ENCODE measurements at regions of chr3 and their contacts with region 1.

Region 1: DNA sequence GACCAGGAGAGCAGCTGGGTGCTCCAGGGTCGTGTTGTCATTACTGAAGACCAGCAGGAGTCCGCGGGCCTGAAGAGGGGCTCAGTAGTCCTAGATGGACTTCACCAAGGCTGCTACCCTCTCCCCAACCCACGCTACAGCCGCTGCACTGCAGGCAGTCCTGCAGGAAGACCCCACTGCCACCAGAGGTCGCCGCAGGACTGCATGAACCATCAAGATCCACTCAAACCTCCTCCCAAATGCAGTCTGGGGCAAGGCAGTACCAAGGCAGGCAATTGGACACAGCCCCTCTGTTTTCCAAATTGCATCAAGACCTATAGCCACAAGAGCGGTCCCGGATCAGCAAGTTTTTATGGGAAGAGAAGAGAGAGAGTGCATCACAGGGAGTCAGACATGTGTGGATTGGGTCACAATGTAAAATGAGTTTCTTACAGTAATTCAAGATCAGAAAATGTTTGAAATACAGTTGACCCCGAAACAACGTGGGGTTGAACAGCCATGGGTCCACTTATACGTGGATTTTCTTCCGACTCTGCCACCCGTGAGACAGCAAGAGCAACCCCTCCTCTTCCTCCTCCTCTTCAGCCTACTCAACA is 46.7 kb downstream of the DZIP1L start:
- DNase-seq: peak; percentile 75
- H3K4me3 ChIP-seq: no peak overlapping the region
- H3K27ac ChIP-seq: no peak overlapping the region
- H3K4me1 ChIP-seq: no peaks in the 10 kb centered on the region
- H3K27me3 ChIP-seq: no peaks in the 10 kb centered on the region
- CTCF ChIP-seq: peak; percentile 99

Region 2: GRCh38 chr3:137930976-137931375 is 137.7 kb before region 1 on chr3:
- intact Hi-C with region 1: no loop called
- DNase-seq: no peak
- H3K4me3 ChIP-seq: no peak overlapping the region
- H3K27ac ChIP-seq: no peak overlapping the region
- H3K4me1 ChIP-seq: no peaks in the 10 kb centered on the region
- H3K27me3 ChIP-seq: peaks cover 14% of the 10 kb centered on the region
- CTCF ChIP-seq: no peak

Region 3: DNA sequence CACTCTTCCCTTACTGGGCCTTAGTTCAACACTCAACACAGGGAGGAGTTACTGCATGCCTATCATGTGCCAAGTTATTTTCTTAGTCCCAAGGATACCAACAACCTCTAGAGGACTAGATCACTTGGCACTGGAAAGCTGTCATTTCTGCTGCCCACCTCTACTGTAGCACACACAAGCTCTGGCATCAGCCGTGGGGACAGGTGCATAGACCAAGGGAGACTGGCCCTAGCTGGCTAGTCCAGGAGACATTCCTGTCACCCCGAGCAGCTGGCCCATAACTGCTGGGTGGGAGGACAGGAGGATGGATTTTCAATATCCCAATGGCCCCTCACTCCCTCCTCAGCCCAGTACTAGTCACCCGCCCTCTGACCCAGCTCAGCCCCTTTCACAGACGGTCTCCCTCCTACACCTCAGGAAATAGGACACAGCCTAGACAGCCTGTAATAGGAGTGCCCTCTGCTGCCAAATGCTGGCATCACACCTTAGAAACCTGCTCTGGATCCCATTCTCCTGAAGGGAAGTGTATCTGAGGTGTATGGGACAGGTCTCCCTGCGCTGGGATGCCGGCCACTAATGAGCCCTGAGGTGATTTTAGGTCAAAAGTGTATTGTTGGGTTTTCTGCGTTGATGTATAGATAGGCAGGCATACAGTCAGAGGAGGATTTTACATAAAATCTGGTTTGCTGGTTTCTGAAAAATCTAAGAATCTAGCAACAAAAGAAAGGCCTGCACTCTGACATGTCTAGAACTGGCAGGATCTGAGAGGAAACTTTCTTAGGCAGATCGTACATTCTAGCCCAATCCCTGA is 50.1 kb after region 1 on chr3:
- intact Hi-C with region 1: loop called (anchors 5 kb)
- DNase-seq: peak; percentile 66
- H3K4me3 ChIP-seq: no peak overlapping the region
- H3K27ac ChIP-seq: no peak overlapping the region
- H3K4me1 ChIP-seq: peaks cover 26% of the 10 kb centered on the region
- H3K27me3 ChIP-seq: no peaks in the 10 kb centered on the region
- CTCF ChIP-seq: peak; percentile 89

Region 4: GRCh38 chr3:138356730-138357405 is 288.2 kb after region 1 on chr3:
- intact Hi-C with region 1: no loop called
- DNase-seq: no peak
- H3K4me3 ChIP-seq: peak overlapping the region; percentile 4
- H3K27ac ChIP-seq: peak overlapping the region; percentile 92
- H3K4me1 ChIP-seq: peaks cover 100% of the 10 kb centered on the region
- H3K27me3 ChIP-seq: no peaks in the 10 kb centered on the region
- CTCF ChIP-seq: no peak

Measured in left ventricle myocardium inferior (tissue), 1 donor.